Activated CD8-positive, alpha-beta T cell treated with anti-CD3 and anti-CD28 coated beads, Interleukin-2, amount 10 ng/mL, durations not matched to agents 7 days and 5 days (primary cell): ENCODE measurements at regions of chr4 and their contacts with region 1.

Region 1: DNA sequence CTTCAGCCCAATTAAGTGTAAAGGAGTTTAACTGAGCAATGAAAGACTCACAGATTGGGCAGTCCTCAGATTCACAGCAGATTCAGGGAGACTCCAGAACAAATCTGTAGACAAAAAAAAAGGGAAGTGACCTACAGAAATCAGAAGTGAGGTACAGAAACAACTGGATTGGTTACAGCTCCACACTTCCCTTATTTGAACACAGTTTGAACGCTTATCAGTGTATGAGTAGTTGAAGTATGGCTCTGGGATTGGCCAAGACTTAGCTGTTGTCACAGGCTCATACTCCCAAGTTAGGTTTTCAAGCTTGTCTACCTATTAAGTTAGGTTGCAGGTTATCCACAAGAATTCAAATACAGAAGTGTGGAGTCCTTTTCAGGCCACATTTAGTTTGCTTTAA is 112.4 kb upstream of the ELOVL6 start:
- DNase-seq: no peak
- ATAC-seq: no peak
- H3K4me3 Mint-ChIP-seq: no peak overlapping the region
- H3K27ac Mint-ChIP-seq: no peak overlapping the region
- H3K4me1 Mint-ChIP-seq: no peaks in the 10 kb centered on the region
- H3K27me3 Mint-ChIP-seq: peaks cover 10% of the 10 kb centered on the region

Region 2: GRCh38 chr4:110005461-110006056 is 305.2 kb before region 1 on chr4:
- CTCF ChIA-PET with region 1: interaction called, 11 read pairs
- POLR2A ChIA-PET with region 1: no interaction called
- DNase-seq: no peak
- ATAC-seq: peak; percentile 64
- H3K4me3 Mint-ChIP-seq: no peak overlapping the region
- H3K27ac Mint-ChIP-seq: no peak overlapping the region
- H3K4me1 Mint-ChIP-seq: peaks cover 6% of the 10 kb centered on the region
- H3K27me3 Mint-ChIP-seq: peaks cover 17% of the 10 kb centered on the region